ENCODE measurements at regions of chr9 and their contacts with region 1.

Region 1: GRCh38 chr9:34989003-34989945 is at the start of gene DNAJB5:
- DNase-seq: peak; percentile 100
- H3K4me3 ChIP-seq: peak within 1 kb of the TSS; percentile 47 to 88 (median 60)
- H3K27ac ChIP-seq: peak within 1 kb of the TSS; percentile 79
- H3K4me1 ChIP-seq: peaks cover 40% of the 10 kb centered on the region
- H3K27me3 ChIP-seq: no peaks in the 10 kb centered on the region
- CTCF ChIP-seq: no peak
- POLR2A ChIP-seq: peak; percentile 67
- total RNA-seq, gene DNAJB5: 9.7 and 12.8 TPM in 2 replicates

Region 2: GRCh38 chr9:34759432-34760134 is 229.7 kb before region 1 on chr9:
- CTCF ChIA-PET with region 1: interaction called, 26 read pairs
- POLR2A ChIA-PET with region 1: no interaction called
- dilution Hi-C with region 1: no loop called
- intact Hi-C with region 1: no loop called
- DNase-seq: no peak
- H3K4me3 ChIP-seq: no peak overlapping the region
- H3K27ac ChIP-seq: no peak overlapping the region
- H3K4me1 ChIP-seq: no peaks in the 10 kb centered on the region
- H3K27me3 ChIP-seq: peaks cover 0 to 2% of the 10 kb centered on the region in 2 experiments
- CTCF ChIP-seq: no peak
- POLR2A ChIP-seq: no peak

Region 3: GRCh38 chr9:35026671-35027070 is 37.4 kb after region 1 on chr9:
- CTCF ChIA-PET with region 1: interaction called, 10 read pairs
- POLR2A ChIA-PET with region 1: no interaction called
- dilution Hi-C with region 1: no loop called
- intact Hi-C with region 1: no loop called
- DNase-seq: peak; percentile 19
- H3K4me3 ChIP-seq: no peak overlapping the region
- H3K27ac ChIP-seq: no peak overlapping the region
- H3K4me1 ChIP-seq: peaks cover 9% of the 10 kb centered on the region
- H3K27me3 ChIP-seq: no peaks in the 10 kb centered on the region
- CTCF ChIP-seq: no peak
- POLR2A ChIP-seq: no peak

Region 4: DNA sequence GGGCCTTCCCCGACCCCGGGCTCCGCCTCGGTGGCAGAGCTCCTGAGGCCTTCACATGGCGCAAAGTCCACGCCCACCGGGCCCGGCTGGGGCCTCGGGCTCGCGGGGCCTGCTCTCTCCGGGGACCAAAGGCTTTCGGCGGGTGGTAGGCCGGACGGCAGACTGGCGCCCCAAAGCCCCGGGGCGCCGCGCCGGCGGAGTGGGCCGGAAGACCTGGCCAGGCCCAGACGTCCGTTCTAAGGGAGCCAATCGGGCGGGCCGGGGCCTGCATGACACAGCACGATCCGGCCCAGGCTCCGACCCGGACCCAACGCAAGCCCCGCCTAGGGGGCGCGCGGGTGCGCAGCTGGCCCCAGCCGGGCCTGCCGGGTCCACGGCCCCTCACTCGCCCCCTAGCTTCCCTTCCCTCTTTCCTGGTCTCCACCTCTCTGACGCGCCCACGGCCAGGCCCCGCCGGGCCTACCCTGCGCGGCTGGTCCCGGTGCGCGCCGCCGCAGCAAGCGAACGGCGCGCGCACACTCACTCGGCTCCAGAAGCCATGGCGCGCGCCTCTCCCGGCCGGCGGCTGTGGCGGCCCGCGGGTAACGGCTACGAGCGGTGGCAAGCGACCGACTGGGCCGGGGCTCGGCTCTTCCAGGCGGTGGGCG is 82.7 kb after region 1 on chr9:
- CTCF ChIA-PET with region 1: interaction called, 4 read pairs
- POLR2A ChIA-PET with region 1: no interaction called
- dilution Hi-C with region 1: no loop called
- intact Hi-C with region 1: loop called (anchors 2 kb)
- DNase-seq: peak; percentile 85
- H3K4me3 ChIP-seq: peak overlapping the region; percentile 79 to 97 (median 96)
- H3K27ac ChIP-seq: peak overlapping the region; percentile 95
- H3K4me1 ChIP-seq: peaks cover 29% of the 10 kb centered on the region
- H3K27me3 ChIP-seq: no peaks in the 10 kb centered on the region
- CTCF ChIP-seq: peak; percentile 25 to 65
- POLR2A ChIP-seq: peak; percentile 51